Activated naive CD4-positive, alpha-beta T cell treated with anti-CD3 and anti-CD28 coated beads for 36 hours (primary cell): ENCODE measurements at regions of chr7 and their contacts with region 1.

Region 1: DNA sequence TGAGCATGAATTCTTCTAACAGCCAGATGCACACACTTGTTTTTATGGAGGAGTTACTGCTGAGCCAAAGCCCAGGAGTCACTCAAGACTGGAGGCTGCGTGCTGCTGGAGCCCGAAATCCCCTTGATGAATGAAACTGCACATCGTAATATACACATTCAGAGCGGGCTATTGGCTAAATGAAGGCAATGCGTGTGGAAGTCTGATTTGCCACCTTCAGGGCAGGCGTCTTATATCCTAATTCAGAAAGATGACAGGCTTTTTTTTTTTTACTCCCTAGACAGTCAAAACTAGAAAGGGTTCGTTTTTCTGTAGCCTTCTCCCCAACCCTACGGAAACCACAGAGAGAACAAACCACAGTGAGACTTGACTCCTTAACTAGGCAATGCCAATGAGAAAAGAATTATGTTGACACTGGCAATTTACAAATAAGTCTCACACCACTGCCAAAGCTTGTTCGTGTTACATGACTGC is 227.2 kb upstream of the KLF14 start:
- DNase-seq: peak; percentile 92
- H3K4me3 Mint-ChIP-seq: peak overlapping the region; percentile 87
- H3K27ac Mint-ChIP-seq: peak overlapping the region; percentile 99
- H3K4me1 Mint-ChIP-seq: peaks cover 36% of the 10 kb centered on the region
- H3K27me3 Mint-ChIP-seq: no peaks in the 10 kb centered on the region

Region 2: GRCh38 chr7:130182990-130183389 is 778.2 kb before region 1 on chr7:
- CTCF ChIA-PET with region 1: no interaction called
- intact Hi-C with region 1: loop called (anchors 2 kb)
- DNase-seq: no peak
- H3K4me3 Mint-ChIP-seq: no peak overlapping the region
- H3K27ac Mint-ChIP-seq: peak overlapping the region; percentile 65
- H3K4me1 Mint-ChIP-seq: peaks cover 30% of the 10 kb centered on the region
- H3K27me3 Mint-ChIP-seq: no peaks in the 10 kb centered on the region

Region 3: DNA sequence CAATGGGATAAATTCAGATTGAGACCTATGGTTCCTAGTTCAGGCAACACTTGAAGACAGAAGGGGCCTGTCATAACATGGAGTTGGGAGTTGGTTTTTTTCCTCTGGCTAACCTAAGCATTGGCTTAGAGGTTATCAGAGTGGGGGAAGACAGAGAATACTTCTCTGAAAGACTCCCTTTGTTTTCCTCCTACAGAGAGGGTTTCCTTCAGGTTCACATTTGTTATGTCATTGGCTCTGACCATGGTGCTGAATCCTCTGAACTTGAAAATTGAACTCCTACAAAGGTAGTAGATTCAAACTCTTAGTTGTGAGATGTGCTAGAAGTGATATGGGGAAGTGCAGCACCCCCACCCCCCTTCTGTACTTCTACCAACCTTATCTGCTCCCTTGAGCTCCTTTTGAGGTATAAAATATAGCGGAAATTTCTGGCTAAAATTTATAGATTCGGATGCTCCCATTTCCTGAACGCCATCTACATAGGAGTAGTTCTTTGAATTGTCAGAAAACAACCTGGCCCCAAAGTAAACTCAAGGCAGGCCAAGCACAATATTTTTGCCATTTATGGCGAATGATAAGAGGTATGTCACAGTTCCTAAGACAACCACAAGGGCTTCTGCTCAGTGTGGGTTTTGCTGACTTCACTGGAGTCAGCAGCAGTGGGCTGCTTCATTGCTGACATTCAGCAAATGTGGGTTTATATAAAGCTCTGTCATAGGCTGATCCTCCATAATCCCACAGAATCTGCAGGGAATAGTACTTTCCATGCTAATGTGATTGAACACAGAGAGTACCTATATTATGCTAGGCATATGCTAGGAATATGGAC is 95.5 kb before region 1 on chr7:
- CTCF ChIA-PET with region 1: no interaction called
- intact Hi-C with region 1: no loop called
- DNase-seq: no peak
- H3K4me3 Mint-ChIP-seq: no peak overlapping the region
- H3K27ac Mint-ChIP-seq: no peak overlapping the region
- H3K4me1 Mint-ChIP-seq: no peaks in the 10 kb centered on the region
- H3K27me3 Mint-ChIP-seq: no peaks in the 10 kb centered on the region

Region 4: GRCh38 chr7:130943336-130943901 is 17.7 kb before region 1 on chr7:
- CTCF ChIA-PET with region 1: interaction called, 32 read pairs
- intact Hi-C with region 1: loop called (anchors 1 kb)
- DNase-seq: no peak
- H3K4me3 Mint-ChIP-seq: peak overlapping the region; percentile 62
- H3K27ac Mint-ChIP-seq: peak overlapping the region; percentile 90
- H3K4me1 Mint-ChIP-seq: peaks cover 91% of the 10 kb centered on the region
- H3K27me3 Mint-ChIP-seq: no peaks in the 10 kb centered on the region

Region 5: DNA sequence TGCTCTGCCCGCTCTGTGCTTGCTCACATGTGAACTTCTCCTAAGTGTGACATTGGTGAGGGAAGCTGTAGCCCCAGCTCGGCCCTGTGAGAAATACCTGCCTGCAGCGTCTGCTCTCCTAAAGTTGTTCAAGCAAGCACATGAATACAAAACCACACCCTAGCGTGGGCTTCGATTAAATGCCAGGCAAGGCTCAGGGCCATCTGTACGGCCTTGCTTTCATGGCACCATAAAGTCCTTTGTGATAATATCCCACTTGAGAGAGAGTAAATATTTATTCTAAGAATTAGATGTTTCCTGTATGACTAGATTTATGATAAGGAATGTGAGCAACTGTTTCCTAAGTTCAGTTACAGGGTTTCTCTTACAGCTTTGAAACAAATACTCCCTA is 35.7 kb after region 1 on chr7:
- CTCF ChIA-PET with region 1: interaction called, 19 read pairs
- intact Hi-C with region 1: no loop called
- DNase-seq: peak; percentile 58
- H3K4me3 Mint-ChIP-seq: peak overlapping the region; percentile 59
- H3K27ac Mint-ChIP-seq: peak overlapping the region; percentile 90
- H3K4me1 Mint-ChIP-seq: peaks cover 79% of the 10 kb centered on the region
- H3K27me3 Mint-ChIP-seq: no peaks in the 10 kb centered on the region

Region 6: GRCh38 chr7:131040467-131040932 is 79.3 kb after region 1 on chr7:
- CTCF ChIA-PET with region 1: interaction called, 16 read pairs
- intact Hi-C with region 1: loop called (anchors 1 kb)
- DNase-seq: peak; percentile 75
- H3K4me3 Mint-ChIP-seq: peak overlapping the region; percentile 61
- H3K27ac Mint-ChIP-seq: peak overlapping the region; percentile 65
- H3K4me1 Mint-ChIP-seq: peaks cover 64% of the 10 kb centered on the region
- H3K27me3 Mint-ChIP-seq: no peaks in the 10 kb centered on the region

Region 7: GRCh38 chr7:131188367-131189339 is 227.5 kb after region 1 on chr7:
- CTCF ChIA-PET with region 1: no interaction called
- intact Hi-C with region 1: loop called (anchors 10 kb)
- DNase-seq: peak; percentile 70
- H3K4me3 Mint-ChIP-seq: no peak overlapping the region
- H3K27ac Mint-ChIP-seq: peak overlapping the region; percentile 89
- H3K4me1 Mint-ChIP-seq: peaks cover 51% of the 10 kb centered on the region
- H3K27me3 Mint-ChIP-seq: no peaks in the 10 kb centered on the region